AG04449 (cell line): ENCODE measurements at regions of chrX and their contacts with region 1.

Region 1: GRCh38 chrX:153470435-153471363 is at the start of gene HAUS7:
- DNase-seq: peak; percentile 19
- H3K4me3 ChIP-seq: peak within 1 kb of the TSS; percentile 65
- CTCF ChIP-seq: peak; percentile 91

Region 2: DNA sequence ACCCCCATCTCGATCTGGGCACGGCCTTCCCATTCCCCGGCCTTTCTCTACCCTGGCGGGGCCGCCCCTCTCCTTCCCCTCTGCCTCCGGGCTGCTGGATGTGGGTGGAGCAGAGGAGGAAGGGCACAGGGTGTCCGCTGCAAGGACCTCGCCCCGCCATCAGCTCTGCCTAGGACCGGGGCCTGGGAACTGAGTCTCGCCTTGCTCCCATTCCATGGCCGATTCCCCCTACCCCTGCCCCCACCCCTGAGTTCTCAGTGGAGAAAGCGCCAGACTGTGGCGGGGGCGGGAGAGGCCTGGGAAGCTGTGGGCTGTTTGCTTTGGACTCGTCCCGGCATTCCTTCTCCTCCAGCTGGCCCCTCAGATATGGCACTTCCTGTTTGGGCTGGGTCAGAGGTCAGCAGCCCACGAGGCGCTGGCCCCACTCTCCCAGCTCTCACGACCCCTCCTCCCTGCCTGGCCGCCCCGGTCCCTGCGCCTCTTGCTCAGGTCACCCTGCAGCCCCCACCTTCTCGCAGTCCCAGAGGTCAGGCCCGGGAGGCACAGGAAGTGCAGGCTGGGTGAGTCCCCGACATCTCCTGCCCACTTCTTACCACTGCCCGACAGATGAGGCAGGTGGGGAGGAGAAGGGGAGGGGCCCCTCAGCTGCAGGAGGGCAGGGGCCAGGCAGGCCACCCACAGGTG is 17.7 kb after region 1 on chrX:
- CTCF ChIA-PET with region 1: interaction called, 90 read pairs
- POLR2A ChIA-PET with region 1: interaction called, 7 read pairs
- DNase-seq: no peak
- H3K4me3 ChIP-seq: no peak overlapping the region
- CTCF ChIP-seq: no peak

Region 3: DNA sequence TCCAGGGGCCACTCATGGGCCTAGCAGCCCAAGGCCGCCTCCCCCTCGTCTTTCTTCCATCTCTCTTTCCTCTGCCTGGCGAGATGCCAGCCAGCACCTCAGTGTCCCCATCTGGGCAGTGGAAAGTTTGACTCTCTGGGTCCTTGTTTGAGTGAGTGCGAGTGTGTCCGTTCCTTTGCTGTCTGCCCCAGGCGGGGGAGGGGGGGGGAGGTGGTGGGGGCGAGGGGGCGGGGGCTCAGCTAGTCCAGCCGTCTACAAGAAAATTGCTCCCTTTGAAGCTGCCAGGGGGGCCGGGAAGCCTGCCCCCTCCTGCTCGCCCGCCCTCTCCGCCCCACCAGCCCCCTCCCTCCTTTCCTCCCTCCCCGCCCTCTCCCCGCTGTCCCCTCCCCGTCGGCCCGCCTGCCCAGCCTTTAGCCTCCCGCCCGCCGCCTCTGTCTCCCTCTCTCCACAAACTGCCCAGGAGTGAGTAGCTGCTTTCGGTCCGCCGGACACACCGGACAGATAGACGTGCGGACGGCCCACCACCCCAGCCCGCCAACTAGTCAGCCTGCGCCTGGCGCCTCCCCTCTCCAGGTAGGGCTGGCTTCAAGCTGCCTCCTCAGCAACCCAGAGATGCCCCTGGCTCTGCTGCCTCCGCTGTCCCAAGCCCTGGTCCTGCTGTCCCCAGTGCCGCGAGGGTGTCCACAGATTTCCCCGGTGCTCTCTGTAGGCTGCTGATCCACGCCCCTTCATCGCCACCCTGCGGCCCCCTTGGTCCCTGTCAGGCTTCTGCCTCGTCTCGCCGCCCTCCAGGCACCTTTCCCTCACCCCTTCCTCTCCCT is 24.1 kb after region 1 on chrX and contains the start of gene BGN:
- CTCF ChIA-PET with region 1: interaction called, 90 read pairs
- POLR2A ChIA-PET with region 1: interaction called, 15 read pairs
- DNase-seq: no peak
- H3K4me3 ChIP-seq: peak within 1 kb of the TSS; percentile 72
- CTCF ChIP-seq: peak; percentile 59

Region 4: DNA sequence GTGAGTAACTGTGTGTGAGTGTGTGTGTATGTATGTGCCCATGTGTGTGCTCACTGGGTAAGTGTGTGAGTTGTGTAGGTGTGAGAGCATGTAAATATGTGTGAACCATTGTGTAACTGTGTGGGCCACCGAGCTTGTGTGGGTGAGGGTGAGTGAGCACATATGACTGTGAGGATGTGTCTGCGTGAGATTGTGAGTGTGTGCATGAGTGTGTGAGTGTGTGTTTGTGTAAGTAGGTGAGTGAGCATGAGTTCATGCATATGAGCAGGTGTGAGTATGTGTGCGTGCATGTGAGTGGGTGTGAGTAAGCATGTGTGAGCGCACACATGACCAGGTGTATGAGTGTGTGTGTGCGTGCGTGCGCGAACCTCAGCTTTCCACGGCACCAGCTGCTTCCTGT is 45.4 kb after region 1 on chrX:
- CTCF ChIA-PET with region 1: interaction called, 166 read pairs
- POLR2A ChIA-PET with region 1: interaction called, 20 read pairs
- DNase-seq: no peak
- H3K4me3 ChIP-seq: no peak overlapping the region
- CTCF ChIP-seq: no peak